Mammary epithelial cell (primary cell): ENCODE measurements at regions of chr20 and their contacts with region 1.

Region 1: DNA sequence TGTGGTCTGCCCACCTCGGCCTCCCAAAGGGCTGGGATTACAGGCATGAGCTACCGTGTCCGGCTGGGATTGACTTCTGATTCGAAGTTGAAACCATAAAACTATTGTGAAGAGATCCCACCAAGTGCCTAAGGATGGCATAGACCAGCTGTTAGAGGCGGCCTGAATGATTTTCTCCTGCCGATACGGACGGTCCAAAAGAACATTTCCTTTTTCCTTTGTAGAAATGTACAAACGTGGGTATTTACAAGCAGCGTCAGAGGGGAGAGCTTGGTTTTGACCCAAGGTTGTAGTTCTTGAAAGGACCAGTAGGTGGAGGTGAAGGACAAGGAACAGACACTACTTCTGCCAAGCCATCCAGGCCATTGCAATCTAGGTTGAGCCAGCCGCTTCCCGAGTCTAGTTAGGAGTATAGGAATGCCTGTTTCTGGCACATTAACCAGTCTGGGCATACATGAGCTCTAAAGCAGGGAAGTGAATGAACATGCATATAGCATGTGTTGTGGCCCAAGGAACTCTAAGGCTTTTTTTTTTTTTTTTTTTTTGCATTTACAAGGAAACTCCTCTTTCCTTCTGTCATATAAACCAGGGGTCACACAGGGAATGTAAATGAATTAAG is 29.1 kb downstream of the MOCS3 start:
- DNase-seq: peak; percentile 80
- H3K4me3 ChIP-seq: no peak overlapping the region
- H3K27ac ChIP-seq: no peak overlapping the region
- H3K4me1 ChIP-seq: peaks cover 23% of the 10 kb centered on the region
- H3K27me3 ChIP-seq: no peaks in the 10 kb centered on the region
- CTCF ChIP-seq: peak; percentile 72 to 86

Region 2: DNA sequence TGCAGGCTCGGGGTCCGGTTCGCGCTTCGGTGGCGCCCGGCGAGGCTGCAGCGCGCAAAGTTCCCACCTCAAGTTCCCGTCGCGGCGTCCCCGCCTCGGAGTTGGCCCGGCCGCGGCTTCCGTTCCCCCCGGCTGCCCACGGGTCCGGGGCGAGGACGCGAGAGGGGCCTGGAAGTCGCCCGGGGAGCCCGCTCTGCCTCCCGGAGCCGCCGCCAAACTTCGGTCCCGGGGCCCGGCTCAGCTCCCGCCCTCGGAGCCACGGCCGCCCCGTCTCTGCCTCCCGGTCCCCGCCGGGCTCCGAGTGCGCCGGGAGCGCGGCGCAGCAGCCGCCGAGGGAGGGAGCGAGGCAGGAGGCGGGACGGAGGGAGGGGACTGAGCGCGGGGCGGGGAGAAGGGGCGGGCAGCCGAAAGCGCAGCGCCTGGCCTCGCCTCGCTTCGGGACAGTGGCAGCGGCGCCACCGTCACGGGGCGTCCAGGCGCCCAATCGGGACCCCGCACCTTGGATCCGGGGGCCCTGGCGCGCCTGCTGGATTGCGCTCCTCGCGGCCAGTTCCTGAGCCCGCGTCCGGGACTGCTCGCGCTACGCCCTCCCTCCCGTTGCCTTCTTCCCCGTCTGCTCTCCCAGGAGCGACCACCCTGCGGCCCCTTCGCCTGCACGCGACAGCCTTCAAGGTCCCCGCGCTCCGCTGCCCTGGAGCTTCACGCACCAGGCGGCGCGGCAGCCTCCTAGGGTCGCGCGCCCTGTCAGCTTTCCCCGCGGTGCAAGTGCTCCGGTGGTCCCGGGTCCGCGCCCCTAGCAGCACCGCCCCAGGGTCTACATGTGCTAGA is 35.3 kb after region 1 on chr20 and contains the start of gene KCNG1:
- CTCF ChIA-PET with region 1: interaction called, 3 read pairs
- dilution Hi-C with region 1: no loop called
- in situ Hi-C with region 1: no loop called
- intact Hi-C with region 1: loop called (anchors 2 kb)
- DNase-seq: peak; percentile 76
- H3K4me3 ChIP-seq: peak within 1 kb of the TSS; percentile 70 to 83 (median 73)
- H3K27ac ChIP-seq: peak within 1 kb of the TSS; percentile 28
- H3K4me1 ChIP-seq: peaks cover 37% of the 10 kb centered on the region
- H3K27me3 ChIP-seq: peaks cover 5% of the 10 kb centered on the region
- CTCF ChIP-seq: no peak
- total RNA-seq, gene KCNG1: 43.9 to 53.0 TPM

Region 3: GRCh38 chr20:51306503-51307358 is 319.0 kb after region 1 on chr20:
- CTCF ChIA-PET with region 1: interaction called, 9 read pairs
- dilution Hi-C with region 1: no loop called
- in situ Hi-C with region 1: loop called (anchors 5 kb)
- intact Hi-C with region 1: loop called (anchors 1 kb)
- DNase-seq: peak; percentile 41
- H3K4me3 ChIP-seq: no peak overlapping the region
- H3K27ac ChIP-seq: no peak overlapping the region
- H3K4me1 ChIP-seq: no peaks in the 10 kb centered on the region
- H3K27me3 ChIP-seq: no peaks in the 10 kb centered on the region
- CTCF ChIP-seq: peak; percentile 74 to 94

Region 4: DNA sequence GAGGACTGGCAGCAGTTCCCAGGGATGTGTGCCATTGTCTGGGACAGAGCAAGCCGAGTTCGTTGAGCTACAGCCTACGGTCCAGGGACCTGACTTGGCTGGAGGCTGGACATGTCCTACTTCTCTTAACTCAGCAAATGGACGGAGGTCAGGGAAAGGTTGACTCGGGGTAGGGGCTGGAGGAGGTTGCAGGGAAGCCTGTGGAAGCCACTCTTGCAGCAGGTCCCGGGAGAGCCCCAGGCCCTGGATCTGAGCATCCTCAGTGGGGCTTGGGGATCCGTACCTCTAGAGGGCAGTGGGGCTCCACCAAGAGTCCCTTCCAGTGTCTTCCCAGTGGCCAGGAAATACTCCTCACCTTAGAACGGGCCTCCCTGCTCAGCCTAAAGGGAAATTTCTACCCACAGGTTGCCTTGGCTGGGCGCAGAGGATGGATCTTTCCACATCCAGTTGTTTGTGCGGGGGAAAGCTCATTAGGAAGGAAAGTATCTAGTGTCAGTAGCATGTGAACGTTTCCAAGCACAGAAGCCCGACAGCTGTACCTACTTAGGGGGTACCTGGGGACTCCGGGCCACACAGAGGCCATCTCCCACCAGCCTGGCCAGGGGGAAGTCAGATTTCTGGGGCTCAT is 384.6 kb after region 1 on chr20:
- CTCF ChIA-PET with region 1: no interaction called
- dilution Hi-C with region 1: no loop called
- in situ Hi-C with region 1: loop called in 1 of 2 experiments (anchors 10 kb)
- intact Hi-C with region 1: loop called (anchors 5 kb)
- DNase-seq: peak; percentile 62
- H3K4me3 ChIP-seq: no peak overlapping the region
- H3K27ac ChIP-seq: no peak overlapping the region
- H3K4me1 ChIP-seq: peaks cover under 1% of the 10 kb centered on the region
- H3K27me3 ChIP-seq: no peaks in the 10 kb centered on the region
- CTCF ChIP-seq: peak; percentile 82 to 94

Region 5: GRCh38 chr20:51595058-51595532 is 607.4 kb after region 1 on chr20:
- CTCF ChIA-PET with region 1: interaction called, 5 read pairs
- dilution Hi-C with region 1: loop called (anchors 25 kb)
- in situ Hi-C with region 1: loop called (anchors 10 to 25 kb)
- intact Hi-C with region 1: loop called (anchors 1 kb)
- DNase-seq: peak; percentile 64
- H3K4me3 ChIP-seq: no peak overlapping the region
- H3K27ac ChIP-seq: no peak overlapping the region
- H3K4me1 ChIP-seq: no peaks in the 10 kb centered on the region
- H3K27me3 ChIP-seq: no peaks in the 10 kb centered on the region
- CTCF ChIP-seq: peak; percentile 90 to 94

Region 6: GRCh38 chr20:51984931-51985415 is 997.3 kb after region 1 on chr20:
- CTCF ChIA-PET with region 1: no interaction called
- dilution Hi-C with region 1: no loop called
- in situ Hi-C with region 1: no loop called
- intact Hi-C with region 1: loop called (anchors 10 kb)
- DNase-seq: peak; percentile 87
- H3K4me3 ChIP-seq: no peak overlapping the region
- H3K27ac ChIP-seq: peak overlapping the region; percentile 63
- H3K4me1 ChIP-seq: peaks cover 13% of the 10 kb centered on the region
- H3K27me3 ChIP-seq: no peaks in the 10 kb centered on the region
- CTCF ChIP-seq: no peak